Mammary epithelial cell (primary cell): ENCODE measurements at regions of chr2 and their contacts with region 1.

Region 1: DNA sequence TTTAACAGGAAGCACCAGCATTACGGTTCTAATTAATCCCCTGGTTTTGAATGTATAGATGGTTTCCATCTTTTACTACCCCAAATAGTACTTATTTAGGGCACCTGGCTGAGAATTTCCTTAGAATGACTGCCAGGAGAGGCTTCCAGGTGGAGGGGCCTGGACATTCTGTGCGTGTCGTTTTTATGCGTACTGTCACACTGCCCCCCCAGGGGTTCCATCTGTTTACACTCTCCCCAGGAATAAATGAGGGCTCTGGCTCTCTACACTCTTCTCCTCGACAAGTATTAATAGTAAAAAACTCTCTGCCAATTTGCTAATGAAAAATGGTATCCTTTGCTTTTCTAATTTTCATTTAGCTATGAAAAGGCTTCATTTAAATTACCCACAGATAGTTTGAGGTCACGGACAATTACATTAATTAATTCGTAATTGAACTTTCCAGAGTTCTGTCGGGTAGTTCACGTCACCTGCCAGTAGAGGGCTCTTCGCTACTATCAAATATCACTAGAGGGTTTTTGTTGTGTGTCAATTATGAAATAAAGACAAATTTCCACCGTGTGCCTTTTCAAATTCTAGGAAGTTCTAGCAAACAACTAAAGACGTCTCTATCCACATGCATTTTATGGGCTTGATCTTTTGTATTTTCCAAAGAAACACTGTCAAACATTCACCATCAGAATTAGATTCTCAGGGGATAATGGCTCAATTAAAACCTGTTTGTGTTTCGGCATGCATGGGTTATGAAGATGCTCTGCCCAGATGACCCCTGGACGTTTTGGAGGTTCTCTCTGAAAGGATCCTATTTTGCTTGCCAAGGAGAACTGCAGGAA is 88.8 kb upstream of the ASB18 start:
- DNase-seq: peak; percentile 9
- H3K4me3 ChIP-seq: no peak overlapping the region
- H3K27ac ChIP-seq: no peak overlapping the region
- H3K4me1 ChIP-seq: no peaks in the 10 kb centered on the region
- H3K27me3 ChIP-seq: no peaks in the 10 kb centered on the region
- CTCF ChIP-seq: peak; percentile 71 to 78

Region 2: GRCh38 chr2:236264256-236264655 is 88.7 kb before region 1 on chr2 and contains the start of gene ASB18:
- CTCF ChIA-PET with region 1: no interaction called
- dilution Hi-C with region 1: no loop called
- in situ Hi-C with region 1: no loop called
- intact Hi-C with region 1: no loop called
- DNase-seq: no peak
- H3K4me3 ChIP-seq: no peak within 1 kb of the TSS
- H3K27ac ChIP-seq: no peak within 1 kb of the TSS
- H3K4me1 ChIP-seq: no peaks in the 10 kb centered on the region
- H3K27me3 ChIP-seq: peaks cover 4% of the 10 kb centered on the region
- CTCF ChIP-seq: no peak
- total RNA-seq, gene ASB18: not detected

Region 3: DNA sequence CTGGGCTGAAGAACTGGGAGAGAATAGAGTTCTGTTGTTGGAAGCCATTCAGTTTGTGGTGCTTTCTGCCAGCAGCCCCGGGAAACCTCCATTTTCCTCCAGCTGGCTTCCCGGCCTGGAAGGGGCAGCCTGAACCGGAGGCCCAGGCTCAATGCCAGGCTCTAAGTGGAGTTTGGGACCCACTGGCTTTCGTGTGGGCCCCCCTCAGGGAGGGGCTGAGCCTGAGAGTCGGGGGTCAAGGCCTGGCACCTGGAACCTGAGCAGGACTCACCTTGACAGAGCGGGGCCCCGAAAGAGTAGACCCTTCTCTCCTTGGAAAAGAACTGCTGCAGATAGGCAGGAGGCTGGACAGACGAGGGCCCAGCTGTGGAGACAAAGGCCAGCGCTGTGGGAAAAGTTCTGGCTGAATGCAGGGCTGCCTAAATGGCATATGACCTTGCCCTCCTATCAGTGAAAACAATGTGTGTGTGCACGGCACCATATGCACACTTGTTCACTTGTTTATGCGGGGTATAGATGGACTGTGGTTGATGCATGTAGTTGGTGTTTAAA is 54.0 kb before region 1 on chr2:
- CTCF ChIA-PET with region 1: no interaction called
- dilution Hi-C with region 1: no loop called
- in situ Hi-C with region 1: no loop called
- intact Hi-C with region 1: no loop called
- DNase-seq: no peak
- H3K4me3 ChIP-seq: no peak overlapping the region
- H3K27ac ChIP-seq: no peak overlapping the region
- H3K4me1 ChIP-seq: no peaks in the 10 kb centered on the region
- H3K27me3 ChIP-seq: no peaks in the 10 kb centered on the region
- CTCF ChIP-seq: no peak

Region 4: DNA sequence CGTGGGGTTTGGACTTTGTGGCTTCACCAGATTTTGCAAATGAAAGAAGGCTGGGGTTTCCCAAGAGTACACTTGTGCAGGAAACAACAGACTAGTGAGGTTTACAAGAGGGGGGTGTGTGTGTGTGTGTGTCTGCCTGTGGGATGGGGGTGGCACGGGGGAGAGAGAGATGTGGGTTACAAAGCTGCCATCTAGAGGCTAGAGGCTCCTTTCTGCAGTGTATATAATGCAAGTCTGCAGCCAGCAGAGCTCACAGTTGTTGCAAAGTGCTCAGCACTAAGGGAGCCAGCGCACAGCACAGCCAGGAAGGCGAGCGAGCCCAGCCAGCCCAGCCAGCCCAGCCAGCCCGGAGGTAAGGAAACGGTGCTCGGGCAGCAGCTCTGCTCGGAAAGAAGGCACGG is 216.6 kb after region 1 on chr2 and contains the start of gene ACKR3:
- CTCF ChIA-PET with region 1: interaction called, 3 read pairs
- dilution Hi-C with region 1: no loop called
- in situ Hi-C with region 1: no loop called
- intact Hi-C with region 1: loop called (anchors 1 kb)
- DNase-seq: peak; percentile 75
- H3K4me3 ChIP-seq: peak within 1 kb of the TSS; percentile 25 to 44 (median 34)
- H3K27ac ChIP-seq: no peak within 1 kb of the TSS
- H3K4me1 ChIP-seq: no peaks in the 10 kb centered on the region
- H3K27me3 ChIP-seq: no peaks in the 10 kb centered on the region
- CTCF ChIP-seq: peak; percentile 44 to 62
- total RNA-seq, gene ACKR3: 1.8 to 79.0 TPM

Region 5: DNA sequence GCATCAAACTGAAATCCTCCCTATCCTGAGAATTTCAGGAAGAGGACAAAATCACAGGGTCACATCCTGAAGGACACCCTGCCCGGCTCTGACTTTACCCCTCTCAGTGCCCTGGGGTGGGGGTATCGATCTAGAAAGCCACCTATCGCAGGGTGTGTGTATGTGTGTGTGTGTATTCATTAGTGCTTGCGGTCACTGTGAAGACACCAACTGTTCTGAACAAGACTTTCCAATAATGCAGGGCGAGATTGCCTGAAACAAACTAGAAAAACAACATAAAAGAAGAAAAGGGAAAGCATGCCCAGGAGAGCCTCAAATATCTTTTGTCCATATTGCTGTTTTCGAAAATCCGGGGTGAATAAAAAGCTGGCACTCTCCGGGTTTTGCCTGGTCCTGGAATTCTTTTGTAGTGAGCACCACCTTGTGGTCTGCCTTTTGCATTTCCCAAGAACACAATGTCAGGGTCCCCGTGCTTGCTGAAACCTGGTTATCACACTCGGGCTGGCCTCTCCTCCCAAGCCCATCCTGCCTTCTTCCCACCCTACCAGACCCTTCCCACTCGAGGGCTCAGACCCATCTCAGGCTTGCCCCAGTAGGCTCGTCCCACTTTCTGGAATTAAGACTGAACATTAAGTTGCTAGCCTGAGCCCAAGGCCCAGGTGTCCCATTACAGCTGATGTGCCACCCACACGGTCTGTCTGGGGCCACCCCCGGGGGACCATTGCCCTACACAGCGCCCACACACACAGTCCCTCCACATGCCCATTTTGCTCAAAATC is 707.7 kb after region 1 on chr2:
- CTCF ChIA-PET with region 1: no interaction called
- dilution Hi-C with region 1: no loop called
- in situ Hi-C with region 1: no loop called
- intact Hi-C with region 1: loop called (anchors 1 kb)
- DNase-seq: peak; percentile 37
- H3K4me3 ChIP-seq: no peak overlapping the region
- H3K27ac ChIP-seq: no peak overlapping the region
- H3K4me1 ChIP-seq: no peaks in the 10 kb centered on the region
- H3K27me3 ChIP-seq: no peaks in the 10 kb centered on the region
- CTCF ChIP-seq: peak; percentile 40 to 67

Region 6: DNA sequence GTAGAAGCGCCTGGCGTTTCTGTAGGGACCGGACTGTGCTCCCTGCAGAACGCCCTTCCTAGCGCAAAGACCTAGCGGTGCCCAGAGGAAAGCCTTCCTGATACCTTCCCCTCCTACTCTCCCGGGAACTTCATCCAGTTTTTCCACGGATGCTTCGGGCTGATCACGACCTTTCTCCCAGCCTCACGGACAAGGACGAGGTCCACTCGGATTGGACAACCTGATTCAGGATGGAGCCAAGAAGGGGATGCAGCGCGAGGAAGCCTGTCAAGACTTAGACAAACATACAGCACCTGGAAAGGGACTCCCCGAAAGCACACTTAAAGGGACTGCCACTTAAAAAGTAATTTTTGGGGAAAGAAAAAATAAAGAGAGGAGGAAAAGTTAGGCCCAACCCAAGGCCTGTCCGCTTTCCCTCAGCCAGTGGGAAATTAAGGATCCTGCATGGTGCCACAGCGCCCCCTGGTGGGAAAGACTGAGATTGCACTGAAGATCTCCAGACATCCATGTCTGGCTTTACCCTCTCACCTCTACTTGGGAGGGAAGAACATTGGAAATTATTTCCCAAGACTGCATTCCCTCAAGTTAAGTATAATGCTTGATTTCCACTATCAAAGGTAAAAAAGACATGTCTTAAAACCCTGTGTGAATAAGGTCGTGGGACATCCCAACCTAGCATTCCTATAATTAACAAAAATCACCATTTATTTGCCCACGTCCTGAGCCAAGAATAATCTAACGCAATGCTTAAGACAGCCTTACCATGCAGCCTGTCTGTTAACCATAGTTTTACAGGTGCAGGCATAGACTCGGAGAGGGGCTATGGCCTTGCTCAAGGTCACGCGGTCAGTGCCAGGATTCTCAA is 719.3 kb after region 1 on chr2:
- CTCF ChIA-PET with region 1: no interaction called
- dilution Hi-C with region 1: no loop called
- in situ Hi-C with region 1: loop called (anchors 5 kb)
- intact Hi-C with region 1: loop called (anchors 1 kb)
- DNase-seq: peak; percentile 31
- H3K4me3 ChIP-seq: no peak overlapping the region
- H3K27ac ChIP-seq: no peak overlapping the region
- H3K4me1 ChIP-seq: no peaks in the 10 kb centered on the region
- H3K27me3 ChIP-seq: no peaks in the 10 kb centered on the region
- CTCF ChIP-seq: peak; percentile 94 to 99